Breast epithelium (tissue), 4 donors: ENCODE measurements at regions of chr7 and their contacts with region 1.

Region 1: DNA sequence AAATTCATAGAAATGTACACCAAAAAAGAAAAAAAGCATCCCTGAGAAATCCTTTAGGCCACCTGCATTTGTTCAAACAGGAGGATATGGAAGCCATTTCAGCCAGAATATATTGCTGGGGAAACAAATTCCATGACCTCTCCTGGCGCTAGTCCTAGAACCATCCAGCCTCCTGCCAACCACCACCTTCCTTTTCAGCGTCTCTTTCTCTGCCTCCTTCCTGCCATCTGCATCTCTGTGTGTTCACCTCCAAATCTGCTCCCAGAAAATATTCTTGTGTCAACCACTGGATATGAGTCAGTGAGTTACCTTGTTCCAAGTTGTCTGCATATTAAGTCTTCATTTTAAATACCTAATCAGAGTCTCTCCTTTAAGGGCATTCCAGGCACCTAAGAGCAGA is 50.6 kb upstream of the NPY start:
- DNase-seq: no peak
- H3K4me3 ChIP-seq: no peak overlapping the region
- H3K27ac ChIP-seq: peak overlapping the region in 1 of 2 donors; percentile 21
- H3K4me1 ChIP-seq: peaks cover 0 to 4% of the 10 kb centered on the region in 2 donors
- H3K27me3 ChIP-seq: no peaks in the 10 kb centered on the region
- CTCF ChIP-seq: no peak
- POLR2A ChIP-seq: no peak

Region 2: DNA sequence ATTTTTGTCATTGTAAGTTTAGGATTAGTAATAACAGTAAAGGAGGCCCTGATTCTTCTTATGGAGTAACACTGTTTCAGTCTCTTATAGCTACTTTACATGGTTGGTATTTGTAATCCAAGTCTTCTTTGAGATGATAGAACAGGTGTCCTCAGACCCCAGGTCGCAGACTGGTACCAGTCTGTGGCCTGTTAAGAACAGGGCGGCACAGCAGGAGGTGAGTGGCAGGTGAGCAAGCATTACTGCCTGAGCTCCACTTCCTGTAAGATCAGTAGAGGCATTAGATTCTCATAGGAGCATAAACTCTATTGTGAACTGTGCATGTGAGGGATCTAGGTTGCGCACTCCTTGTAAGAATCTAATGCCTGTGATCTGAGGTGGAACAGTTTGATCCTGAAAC is 446.1 kb before region 1 on chr7:
- intact Hi-C with region 1: loop called (anchors 10 kb)
- DNase-seq: no peak
- H3K4me3 ChIP-seq: no peak overlapping the region
- H3K27ac ChIP-seq: no peak overlapping the region
- H3K4me1 ChIP-seq: no peaks in the 10 kb centered on the region
- H3K27me3 ChIP-seq: no peaks in the 10 kb centered on the region
- CTCF ChIP-seq: no peak
- POLR2A ChIP-seq: no peak

Region 3: GRCh38 chr7:24102988-24103387 is 130.4 kb before region 1 on chr7:
- intact Hi-C with region 1: no loop called
- DNase-seq: no peak
- H3K4me3 ChIP-seq: no peak overlapping the region
- H3K27ac ChIP-seq: no peak overlapping the region
- H3K4me1 ChIP-seq: no peaks in the 10 kb centered on the region
- H3K27me3 ChIP-seq: no peaks in the 10 kb centered on the region
- CTCF ChIP-seq: no peak
- POLR2A ChIP-seq: no peak

Region 4: DNA sequence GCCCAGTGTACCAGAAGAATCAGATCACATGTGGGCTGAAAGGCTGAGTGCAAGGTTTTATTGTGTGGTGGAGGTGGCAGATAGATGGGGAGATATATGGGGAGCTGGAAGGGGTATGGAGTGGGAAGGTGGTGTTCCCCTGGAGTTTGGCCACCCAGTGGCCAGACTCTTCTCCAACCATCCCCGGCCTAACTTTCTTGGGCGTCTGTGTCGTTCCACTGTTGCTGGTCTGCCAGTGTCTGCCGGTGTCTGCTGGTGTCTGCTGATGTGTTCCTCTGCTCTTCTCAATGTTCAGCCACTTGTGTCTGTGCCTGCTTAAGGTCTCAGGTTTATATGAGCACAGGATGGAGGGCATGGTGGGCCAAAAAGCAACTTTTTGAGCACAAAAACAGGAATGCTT is 261.4 kb after region 1 on chr7:
- intact Hi-C with region 1: no loop called
- DNase-seq: no peak
- H3K4me3 ChIP-seq: no peak overlapping the region
- H3K27ac ChIP-seq: no peak overlapping the region
- H3K4me1 ChIP-seq: no peaks in the 10 kb centered on the region
- H3K27me3 ChIP-seq: no peaks in the 10 kb centered on the region
- CTCF ChIP-seq: no peak
- POLR2A ChIP-seq: no peak

Region 5: DNA sequence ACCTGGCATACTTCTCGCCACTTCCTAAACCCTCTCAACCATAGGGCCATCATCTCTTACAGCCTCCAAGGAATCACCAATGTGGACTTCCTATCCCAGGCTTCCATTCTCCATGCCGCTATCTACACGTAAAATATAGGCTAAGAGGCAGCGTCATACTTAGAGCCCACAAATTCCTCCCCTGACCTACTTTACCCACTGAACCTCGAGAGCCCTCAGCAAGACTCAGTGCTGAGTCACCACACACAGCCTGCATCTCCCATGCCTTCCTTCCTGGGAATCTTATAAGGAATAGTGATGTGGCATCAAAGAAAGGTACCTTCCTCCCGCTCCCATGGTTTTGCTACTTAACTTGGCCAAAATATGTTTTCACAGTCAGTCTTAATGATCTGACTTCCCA is 1483.0 kb after region 1 on chr7:
- intact Hi-C with region 1: no loop called
- DNase-seq: no peak
- H3K4me3 ChIP-seq: no peak overlapping the region
- H3K27ac ChIP-seq: no peak overlapping the region
- H3K4me1 ChIP-seq: no peaks in the 10 kb centered on the region
- H3K27me3 ChIP-seq: no peaks in the 10 kb centered on the region
- CTCF ChIP-seq: no peak
- POLR2A ChIP-seq: no peak